Ascending aorta (tissue), 2 donors: ENCODE measurements at regions of chr5 and their contacts with region 1.

Region 1: DNA sequence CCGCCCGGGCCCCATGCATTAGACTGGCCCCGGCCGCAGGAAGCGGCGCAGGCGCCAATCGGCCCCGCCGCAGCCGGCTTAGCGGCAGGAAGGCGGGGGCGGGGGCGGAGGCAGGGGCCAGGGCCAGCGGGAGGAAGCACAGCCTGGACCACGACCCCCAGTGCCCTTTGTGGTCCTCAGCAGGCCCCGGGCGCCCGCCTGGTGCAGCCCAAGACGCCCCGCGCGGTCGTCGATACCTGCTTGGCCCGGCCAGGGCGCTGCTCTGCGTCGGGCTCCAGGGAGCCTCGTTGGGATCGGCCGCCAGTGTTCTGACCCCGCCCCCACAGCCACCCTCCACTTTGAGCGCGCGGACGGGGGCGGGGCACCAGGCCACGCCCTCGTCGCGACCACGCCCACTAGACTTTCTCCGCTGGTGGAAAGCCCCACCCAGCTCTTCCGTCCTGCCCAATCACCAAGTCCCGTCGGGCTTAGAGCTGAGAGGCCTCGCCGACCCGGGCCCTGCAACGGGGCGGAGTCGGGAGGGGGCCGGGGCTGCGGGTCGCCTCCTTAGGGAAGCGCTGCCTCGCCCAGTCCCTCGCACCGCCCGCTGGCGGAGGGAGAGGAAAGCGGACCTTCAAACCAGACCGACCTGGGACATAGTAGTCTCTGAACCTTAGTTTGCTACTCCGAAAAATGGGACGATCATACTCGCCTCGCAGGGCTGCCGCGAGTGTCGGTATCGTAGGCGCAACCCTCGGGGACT is at the start of gene PDLIM7:
- DNase-seq: peak; percentile 89 to 98
- H3K4me3 ChIP-seq: peak within 1 kb of the TSS; percentile 92 to 93
- H3K27ac ChIP-seq: peak within 1 kb of the TSS; percentile 96 to 99
- H3K4me1 ChIP-seq: peaks cover 23 to 41% of the 10 kb centered on the region in 2 donors
- H3K27me3 ChIP-seq: no peaks in the 10 kb centered on the region
- CTCF ChIP-seq: peak in 1 of 3 experiments; percentile 3
- total RNA-seq, gene PDLIM7: 1,082 TPM

Region 2: DNA sequence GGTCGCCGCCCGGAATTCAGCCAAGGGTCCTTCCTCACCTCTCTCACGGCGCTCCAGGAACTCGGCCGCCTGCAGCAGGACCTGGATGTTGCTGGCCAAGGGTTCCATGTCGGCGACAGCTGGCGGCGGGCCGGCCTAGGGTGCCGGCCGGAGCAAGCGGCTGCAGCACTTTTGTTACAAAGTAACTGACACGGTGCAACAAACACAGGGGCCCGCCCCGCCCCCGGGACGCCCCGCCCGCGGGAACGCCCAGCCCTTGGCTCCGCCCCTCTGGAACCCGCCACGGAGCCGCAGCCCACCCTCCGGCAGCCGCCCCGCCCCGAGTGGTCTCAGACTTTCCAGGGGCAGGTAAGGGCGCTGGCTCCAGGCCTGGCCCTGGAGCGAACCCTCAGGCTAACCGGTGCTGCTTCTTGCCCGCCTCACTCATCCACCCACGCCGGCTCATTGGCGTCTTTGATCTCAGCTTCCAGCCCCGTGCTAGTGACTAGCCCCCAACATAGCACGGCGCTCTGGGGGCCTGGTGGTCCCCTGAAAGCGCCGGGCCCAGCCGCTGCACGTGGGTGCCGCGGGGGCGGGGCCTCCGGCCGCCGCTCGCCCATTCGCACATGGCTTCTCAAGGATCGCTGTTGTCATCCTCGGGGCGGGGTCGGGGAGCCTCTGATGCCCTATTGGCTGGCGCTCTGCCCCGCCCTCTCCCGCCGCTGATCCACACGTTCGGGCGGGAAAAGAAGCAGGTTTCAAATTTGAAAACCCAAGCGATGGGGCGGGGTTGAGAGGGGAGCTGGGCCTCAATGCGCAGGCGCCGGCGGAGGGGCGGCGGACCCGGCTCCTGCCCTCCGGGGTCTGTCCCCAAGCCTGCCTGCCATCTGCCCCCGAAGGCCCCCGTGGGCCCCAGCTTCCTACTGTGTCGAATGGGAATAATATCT is 185.5 kb before region 1 on chr5 and contains the start of gene MXD3:
- intact Hi-C with region 1: loop called (anchors 5 kb)
- DNase-seq: peak; percentile 88 to 98
- H3K4me3 ChIP-seq: peak within 1 kb of the TSS; percentile 57 to 66
- H3K27ac ChIP-seq: no peak within 1 kb of the TSS
- H3K4me1 ChIP-seq: peaks cover 12 to 18% of the 10 kb centered on the region in 2 donors
- H3K27me3 ChIP-seq: no peaks in the 10 kb centered on the region
- CTCF ChIP-seq: no peak
- total RNA-seq, gene MXD3: 13.5 TPM

Region 3: DNA sequence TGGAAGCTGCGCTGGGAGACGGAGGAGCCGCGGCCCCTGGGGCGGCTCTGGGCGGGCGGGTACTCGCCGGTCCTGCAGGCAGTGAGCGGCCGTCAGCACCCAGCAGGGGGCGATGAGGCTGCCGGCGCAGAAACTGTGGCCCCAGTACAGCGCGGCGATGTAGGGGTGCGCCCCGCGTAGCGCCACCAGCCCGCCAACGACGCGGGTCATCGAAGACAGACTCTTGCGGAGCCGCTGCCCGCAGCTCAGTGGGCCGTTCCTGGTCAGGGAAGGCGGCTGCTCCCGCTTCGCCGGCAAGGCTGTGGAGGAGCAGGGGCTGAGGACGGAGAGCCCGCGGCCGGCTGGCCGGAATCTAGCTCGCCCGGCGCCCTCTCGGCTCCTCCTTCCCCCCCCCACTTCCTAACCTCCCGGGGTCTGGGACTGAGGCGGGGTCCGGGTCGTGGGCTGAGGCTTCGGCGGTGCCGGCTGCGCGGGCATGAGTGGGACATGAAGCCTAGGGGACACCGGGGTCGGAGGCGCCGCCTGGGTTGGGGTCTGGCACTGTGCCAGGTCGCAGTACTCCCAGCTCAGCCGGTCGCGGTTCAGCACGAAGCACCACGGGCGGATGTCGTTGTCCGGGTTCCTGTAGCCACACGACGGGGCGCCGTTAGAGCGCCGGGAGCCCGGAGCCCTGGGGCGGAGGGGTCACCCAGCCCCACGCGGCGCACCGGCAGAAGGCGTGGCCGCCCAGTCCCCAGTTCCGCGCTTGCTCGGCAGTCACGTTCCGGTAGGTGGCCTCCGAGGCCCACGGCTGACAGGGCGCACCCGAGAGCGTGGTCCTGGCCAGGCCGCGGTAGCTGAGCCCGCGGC is 93.4 kb before region 1 on chr5:
- intact Hi-C with region 1: loop called (anchors 1 kb)
- DNase-seq: peak in 1 of 2 donors; percentile 89
- H3K4me3 ChIP-seq: peak overlapping the region; percentile 52 to 85
- H3K27ac ChIP-seq: no peak overlapping the region
- H3K4me1 ChIP-seq: peaks cover 17 to 24% of the 10 kb centered on the region in 2 donors
- H3K27me3 ChIP-seq: peaks cover 41% of the 10 kb centered on the region
- CTCF ChIP-seq: peak; percentile 75 to 87 (median 79)

Region 4: GRCh38 chr5:177454397-177455035 is 42.9 kb before region 1 on chr5:
- intact Hi-C with region 1: loop called (anchors 1 kb)
- DNase-seq: peak; percentile 62 to 97
- H3K4me3 ChIP-seq: peak overlapping the region; percentile 53 to 92
- H3K27ac ChIP-seq: peak overlapping the region; percentile 68 to 86
- H3K4me1 ChIP-seq: peaks cover 18 to 22% of the 10 kb centered on the region in 2 donors
- H3K27me3 ChIP-seq: no peaks in the 10 kb centered on the region
- CTCF ChIP-seq: peak; percentile 96 to 97 (median 96)

Region 5: GRCh38 chr5:177465044-177465443 is 32.4 kb before region 1 on chr5:
- intact Hi-C with region 1: no loop called
- DNase-seq: no peak
- H3K4me3 ChIP-seq: no peak overlapping the region
- H3K27ac ChIP-seq: no peak overlapping the region
- H3K4me1 ChIP-seq: peaks cover 7 to 12% of the 10 kb centered on the region in 2 donors
- H3K27me3 ChIP-seq: no peaks in the 10 kb centered on the region
- CTCF ChIP-seq: no peak

Region 6: GRCh38 chr5:177516604-177517568 is 19.4 kb after region 1 on chr5 and contains the start of gene DDX41:
- intact Hi-C with region 1: loop called (anchors 1 kb)
- DNase-seq: peak; percentile 90 to 99
- H3K4me3 ChIP-seq: peak within 1 kb of the TSS; percentile 88 to 97
- H3K27ac ChIP-seq: peak within 1 kb of the TSS; percentile 73 to 82
- H3K4me1 ChIP-seq: peaks cover 4 to 10% of the 10 kb centered on the region in 2 donors
- H3K27me3 ChIP-seq: no peaks in the 10 kb centered on the region
- CTCF ChIP-seq: peak in 1 of 3 experiments; percentile 17
- total RNA-seq, gene DDX41: 117 TPM

Region 7: DNA sequence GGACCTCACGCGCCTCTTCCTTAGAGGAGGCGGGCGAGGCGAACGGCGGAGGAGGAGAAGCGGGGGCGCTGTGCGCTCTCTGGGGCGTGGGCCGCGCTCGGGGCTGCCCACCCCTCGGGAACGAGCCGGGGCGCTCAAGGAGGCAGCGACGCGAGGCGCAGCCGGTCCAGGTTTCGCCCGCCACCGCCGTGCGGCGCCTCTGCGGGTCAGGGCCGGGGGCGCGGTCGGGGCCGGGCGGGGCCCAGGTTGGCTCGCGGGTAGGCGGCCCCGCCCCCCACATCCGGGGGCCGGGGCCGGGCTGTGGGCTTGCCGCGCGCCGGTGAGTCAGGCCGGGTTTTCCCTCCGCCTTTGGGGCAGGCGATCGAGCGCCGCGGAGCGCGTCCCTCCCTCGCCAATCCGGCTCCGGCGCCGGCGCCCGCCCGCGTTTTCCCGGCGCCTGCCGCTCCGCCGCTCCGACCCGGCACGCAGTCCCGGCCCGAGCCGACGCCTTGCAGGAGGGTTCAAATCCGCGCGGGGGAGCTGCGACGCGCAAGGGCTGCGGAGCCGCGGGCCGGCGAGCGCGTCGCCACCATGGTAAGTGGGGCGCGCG is 615.8 kb after region 1 on chr5 and contains the start of gene N4BP3:
- intact Hi-C with region 1: no loop called
- DNase-seq: no peak
- H3K4me3 ChIP-seq: peak within 1 kb of the TSS; percentile 53 to 57
- H3K27ac ChIP-seq: no peak within 1 kb of the TSS
- H3K4me1 ChIP-seq: peaks cover 0 to 6% of the 10 kb centered on the region in 2 donors
- H3K27me3 ChIP-seq: peaks cover 9% of the 10 kb centered on the region
- CTCF ChIP-seq: no peak
- total RNA-seq, gene N4BP3: 0.21 TPM